MCF 10A (cell line): ENCODE measurements at regions of chr13 and their contacts with region 1.

Region 1: GRCh38 chr13:52921194-52921593 is 72.8 kb upstream of the PCDH8 start:
- DNase-seq: no peak
- H3K4me3 Mint-ChIP-seq: no peak overlapping the region
- H3K27ac Mint-ChIP-seq: no peak overlapping the region
- H3K4me1 Mint-ChIP-seq: peaks cover 19% of the 10 kb centered on the region
- H3K27me3 Mint-ChIP-seq: no peaks in the 10 kb centered on the region
- CTCF ChIP-seq: no peak

Region 2: DNA sequence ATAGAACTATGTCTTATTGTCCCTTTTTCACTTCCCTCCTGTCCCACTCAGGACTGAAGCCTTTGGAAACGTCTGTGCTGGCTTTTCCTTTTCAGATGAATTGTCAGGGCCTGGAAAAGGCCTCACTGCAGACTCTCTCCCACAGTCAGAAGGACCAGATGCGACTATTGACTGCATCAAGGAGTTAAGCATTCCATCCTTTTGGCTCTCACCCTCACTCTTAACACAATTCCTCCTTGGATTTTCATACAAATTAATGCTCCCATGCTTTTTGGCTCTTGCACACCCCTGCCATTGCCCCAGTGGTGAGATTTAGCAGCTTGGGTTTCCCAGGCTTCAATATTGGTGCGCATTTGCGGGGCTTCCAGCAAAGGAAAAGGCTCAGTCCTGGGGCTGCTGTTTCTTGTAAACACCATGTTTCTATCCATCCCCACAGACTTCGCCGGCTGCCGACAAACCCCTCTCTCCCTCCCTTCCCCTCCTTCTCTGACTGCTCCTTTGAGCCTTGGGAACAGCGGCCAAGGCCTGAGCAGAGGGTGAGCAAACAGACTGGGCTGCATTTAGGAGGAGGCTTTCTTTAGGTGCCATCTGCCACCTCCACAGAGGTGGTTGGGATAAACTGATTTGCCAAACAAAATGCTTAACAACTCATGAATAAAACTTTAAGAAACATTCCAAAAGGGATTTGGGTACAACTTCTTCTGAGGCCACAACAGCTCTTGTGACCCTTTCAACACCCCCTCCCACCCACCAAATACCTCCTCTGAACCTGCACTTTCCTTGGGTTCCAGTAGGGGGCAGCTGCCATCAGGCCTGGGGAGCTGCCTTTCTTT is 24.2 kb before region 1 on chr13:
- CTCF ChIA-PET with region 1: interaction called, 3 read pairs
- POLR2A ChIA-PET with region 1: no interaction called
- intact Hi-C with region 1: loop called (anchors 2 kb)
- DNase-seq: peak; percentile 30
- H3K4me3 Mint-ChIP-seq: no peak overlapping the region
- H3K27ac Mint-ChIP-seq: no peak overlapping the region
- H3K4me1 Mint-ChIP-seq: no peaks in the 10 kb centered on the region
- H3K27me3 Mint-ChIP-seq: no peaks in the 10 kb centered on the region
- CTCF ChIP-seq: peak; percentile 70

Region 3: GRCh38 chr13:52980695-52981094 is 59.5 kb after region 1 on chr13:
- CTCF ChIA-PET with region 1: no interaction called
- POLR2A ChIA-PET with region 1: no interaction called
- intact Hi-C with region 1: loop called (anchors 2 kb)
- DNase-seq: peak; percentile 63
- H3K4me3 Mint-ChIP-seq: no peak overlapping the region
- H3K27ac Mint-ChIP-seq: peak overlapping the region; percentile 70
- H3K4me1 Mint-ChIP-seq: peaks cover 16% of the 10 kb centered on the region
- H3K27me3 Mint-ChIP-seq: no peaks in the 10 kb centered on the region
- CTCF ChIP-seq: no peak

Region 4: GRCh38 chr13:53004573-53004972 is 83.4 kb after region 1 on chr13:
- CTCF ChIA-PET with region 1: no interaction called
- POLR2A ChIA-PET with region 1: no interaction called
- intact Hi-C with region 1: no loop called
- DNase-seq: peak; percentile 22
- H3K4me3 Mint-ChIP-seq: no peak overlapping the region
- H3K27ac Mint-ChIP-seq: no peak overlapping the region
- H3K4me1 Mint-ChIP-seq: peaks cover under 1% of the 10 kb centered on the region
- H3K27me3 Mint-ChIP-seq: peaks cover 35% of the 10 kb centered on the region
- CTCF ChIP-seq: no peak